Left ventricle myocardium superior (tissue), 1 donor: ENCODE measurements at regions of chr12 and their contacts with region 1.

Region 1: DNA sequence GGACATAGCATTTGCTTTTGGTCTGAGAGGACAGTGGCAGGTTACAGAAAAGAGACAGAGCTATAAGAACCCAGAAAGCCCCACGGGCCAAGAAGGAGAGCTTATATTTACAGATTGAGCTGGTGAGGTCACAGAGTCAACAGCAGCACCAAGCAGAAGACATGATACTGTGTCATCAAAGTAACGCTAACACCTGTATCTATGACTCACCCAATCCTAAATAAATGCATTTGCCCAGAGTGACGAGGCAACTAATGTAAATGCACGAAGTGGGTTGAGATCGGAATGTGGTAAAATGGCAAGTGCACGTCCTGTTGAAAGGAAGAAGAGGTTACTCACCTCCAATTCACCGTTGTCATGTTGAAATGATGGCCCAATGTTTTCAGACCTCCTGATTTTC is 6.7 kb upstream of the CD163L1 start:
- DNase-seq: no peak
- ATAC-seq: no peak

Region 2: GRCh38 chr12:7219599-7220243 is 230.9 kb before region 1 on chr12:
- intact Hi-C with region 1: loop called (anchors 10 kb)
- DNase-seq: peak; percentile 52
- ATAC-seq: peak; percentile 48